Psoas muscle (tissue), 8 donors: ENCODE measurements at regions of chr2 and their contacts with region 1.

Region 1: DNA sequence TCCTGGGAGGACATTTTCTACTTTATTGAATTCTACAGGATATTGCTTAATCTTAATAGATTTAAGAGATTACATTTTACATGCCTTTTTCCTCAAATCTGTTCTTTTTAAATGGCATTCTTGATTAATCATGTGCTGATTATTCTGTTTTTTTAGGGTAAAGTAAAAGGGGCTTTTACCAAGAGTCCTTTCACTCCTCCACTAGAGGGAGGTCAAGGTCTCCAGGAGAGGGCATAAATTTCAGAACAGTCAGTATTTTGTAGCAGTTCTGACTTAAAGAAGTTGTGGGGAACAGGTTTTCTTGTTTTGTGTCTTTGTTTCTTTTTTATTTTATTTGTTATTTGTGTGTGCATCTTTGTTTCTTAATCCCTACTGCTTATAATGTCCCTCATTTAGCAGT is 25.4 kb downstream of the WDR75 start:
- DNase-seq: no peak
- ATAC-seq: peak in 2 of 4 donors; percentile 64 to 83
- H3K4me3 ChIP-seq: no peak overlapping the region
- H3K27ac ChIP-seq: no peak overlapping the region
- H3K4me1 ChIP-seq: no peaks in the 10 kb centered on the region
- H3K27me3 ChIP-seq: no peaks in the 10 kb centered on the region
- CTCF ChIP-seq: peak; percentile 77

Region 2: GRCh38 chr2:189570570-189571031 is 103.9 kb after region 1 on chr2:
- intact Hi-C with region 1: loop called (anchors 5 to 10 kb)
- DNase-seq: no peak
- ATAC-seq: no peak
- H3K4me3 ChIP-seq: no peak overlapping the region
- H3K27ac ChIP-seq: no peak overlapping the region
- H3K4me1 ChIP-seq: peaks cover 24% of the 10 kb centered on the region
- H3K27me3 ChIP-seq: no peaks in the 10 kb centered on the region
- CTCF ChIP-seq: no peak

Region 3: DNA sequence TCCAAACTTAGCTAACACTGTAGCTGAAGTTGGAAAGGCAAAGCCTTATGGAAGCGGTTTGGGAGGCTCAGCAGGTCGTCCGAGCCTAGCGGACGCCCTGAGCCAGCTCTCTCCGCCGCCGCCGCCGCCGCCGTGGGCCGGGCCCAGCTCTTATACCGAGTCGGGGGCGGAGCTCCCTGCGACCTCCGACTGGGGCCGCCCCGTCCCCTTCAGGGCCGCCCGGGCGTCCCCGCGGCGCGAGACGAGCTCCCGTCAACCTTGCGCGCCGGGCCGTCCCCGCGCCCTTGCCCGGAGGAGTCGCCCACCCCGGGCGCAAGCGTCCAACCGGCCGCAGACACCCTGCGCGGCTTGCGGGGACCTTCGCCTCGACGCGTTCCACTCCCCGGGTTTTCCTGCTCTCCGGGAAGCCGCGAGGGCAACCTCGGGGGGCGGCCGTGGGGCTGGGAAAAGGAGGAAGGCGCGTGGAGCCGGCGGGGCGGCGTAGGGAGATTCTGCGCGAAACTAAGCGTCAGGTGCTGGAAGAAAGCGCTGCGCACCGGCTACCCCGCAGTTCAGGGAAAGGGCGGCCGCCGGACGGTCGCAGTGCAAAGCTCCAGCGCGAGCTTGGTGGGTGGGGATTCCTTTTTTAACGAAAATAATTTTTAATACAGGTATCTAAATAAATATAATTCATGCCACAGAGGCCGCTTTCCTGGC is 114.1 kb after region 1 on chr2 and contains the start of gene SLC40A1:
- intact Hi-C with region 1: loop called in 1 of 2 experiments (anchors 10 kb)
- DNase-seq: peak; percentile 86 to 92
- ATAC-seq: peak; percentile 95 to 98 (median 96)
- H3K4me3 ChIP-seq: peak within 1 kb of the TSS; percentile 82
- H3K27ac ChIP-seq: peak within 1 kb of the TSS; percentile 96
- H3K4me1 ChIP-seq: peaks cover 38% of the 10 kb centered on the region
- H3K27me3 ChIP-seq: no peaks in the 10 kb centered on the region
- CTCF ChIP-seq: no peak
- total RNA-seq, gene SLC40A1: 21.5 to 65.7 (median 34.6) TPM

Region 4: DNA sequence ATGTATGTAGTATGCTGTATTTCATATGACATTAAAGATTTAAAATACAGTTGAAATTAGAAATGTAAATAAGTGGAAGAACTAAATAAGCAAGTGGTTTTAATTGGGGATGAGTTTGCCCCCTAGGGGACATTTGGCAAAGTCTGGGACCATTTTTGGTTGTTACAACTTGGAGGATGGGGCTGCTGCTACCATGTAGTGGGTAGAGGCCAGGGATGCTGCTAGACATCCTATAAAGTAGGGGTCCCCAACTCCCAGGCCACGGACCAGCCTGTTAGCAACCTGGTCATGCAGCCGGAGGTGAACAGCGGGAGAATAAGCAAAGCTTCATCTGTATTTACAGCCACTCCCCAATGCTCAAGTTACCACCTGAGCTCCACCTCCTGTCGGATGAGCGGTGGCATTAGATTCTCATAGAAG is 166.7 kb after region 1 on chr2:
- intact Hi-C with region 1: loop called (anchors 5 kb)
- DNase-seq: no peak
- ATAC-seq: peak in 1 of 4 donors; percentile 61
- H3K4me3 ChIP-seq: no peak overlapping the region
- H3K27ac ChIP-seq: no peak overlapping the region
- H3K4me1 ChIP-seq: no peaks in the 10 kb centered on the region
- H3K27me3 ChIP-seq: no peaks in the 10 kb centered on the region
- CTCF ChIP-seq: peak; percentile 48

Region 5: DNA sequence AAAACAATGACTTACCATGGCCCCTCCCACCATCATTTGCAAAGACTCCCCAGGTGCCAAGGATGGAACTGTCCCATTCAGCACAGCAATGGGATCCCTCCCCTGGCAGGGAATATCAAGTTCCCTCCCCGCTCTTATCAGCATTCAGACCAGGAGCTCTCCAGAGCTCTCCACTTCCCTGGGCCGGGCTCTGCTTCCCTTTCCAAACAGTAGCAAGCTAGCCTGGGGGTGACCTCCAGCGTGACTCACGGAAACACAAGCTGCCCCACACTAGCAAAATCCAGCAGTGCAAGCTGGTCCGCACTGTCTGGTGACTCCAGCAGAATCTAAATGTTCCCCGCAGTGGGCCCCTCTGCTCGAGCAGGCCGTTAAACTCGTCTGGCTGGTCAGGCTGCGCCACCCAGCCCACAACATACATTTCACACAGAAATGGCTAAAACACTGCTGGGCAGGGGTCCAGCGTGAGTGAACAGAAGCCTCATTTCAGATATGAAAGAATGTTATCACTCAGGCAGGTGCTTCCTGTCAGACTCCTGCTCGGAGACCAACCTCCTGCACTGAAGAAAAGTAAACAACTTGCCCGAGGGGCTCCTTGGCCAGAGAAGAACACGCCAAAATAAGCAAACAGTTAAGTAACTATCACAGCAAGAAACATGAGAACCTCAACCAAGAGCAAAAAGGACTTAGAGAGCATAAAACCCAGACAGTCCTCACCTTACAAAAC is 1513.4 kb after region 1 on chr2:
- intact Hi-C with region 1: loop called in 1 of 2 experiments (anchors 10 kb)
- DNase-seq: peak; percentile 32 to 61
- ATAC-seq: peak in 3 of 4 donors; percentile 30 to 68 (median 54)
- H3K4me3 ChIP-seq: no peak overlapping the region
- H3K27ac ChIP-seq: no peak overlapping the region
- H3K4me1 ChIP-seq: no peaks in the 10 kb centered on the region
- H3K27me3 ChIP-seq: no peaks in the 10 kb centered on the region
- CTCF ChIP-seq: no peak